CD4-positive, alpha-beta T cell (primary cell): ENCODE measurements at regions of chr1 and their contacts with region 1.

Region 1: GRCh38 chr1:181105134-181106021 is 16.9 kb downstream of the IER5 start:
- DNase-seq: peak; percentile 86 to 97 (median 94)
- ATAC-seq: peak; percentile 88
- H3K4me3 ChIP-seq: peak overlapping the region; percentile 80
- H3K4me3 Mint-ChIP-seq: peak overlapping the region; percentile 88
- H3K27ac ChIP-seq: peak overlapping the region; percentile 58 to 72
- H3K27ac Mint-ChIP-seq: peak overlapping the region; percentile 67
- H3K4me1 ChIP-seq: peaks cover 49% of the 10 kb centered on the region
- H3K4me1 Mint-ChIP-seq: peaks cover 60% of the 10 kb centered on the region
- H3K27me3 ChIP-seq: no peaks in the 10 kb centered on the region
- H3K27me3 Mint-ChIP-seq: no peaks in the 10 kb centered on the region
- CTCF ChIP-seq: peak; percentile 1

Region 2: DNA sequence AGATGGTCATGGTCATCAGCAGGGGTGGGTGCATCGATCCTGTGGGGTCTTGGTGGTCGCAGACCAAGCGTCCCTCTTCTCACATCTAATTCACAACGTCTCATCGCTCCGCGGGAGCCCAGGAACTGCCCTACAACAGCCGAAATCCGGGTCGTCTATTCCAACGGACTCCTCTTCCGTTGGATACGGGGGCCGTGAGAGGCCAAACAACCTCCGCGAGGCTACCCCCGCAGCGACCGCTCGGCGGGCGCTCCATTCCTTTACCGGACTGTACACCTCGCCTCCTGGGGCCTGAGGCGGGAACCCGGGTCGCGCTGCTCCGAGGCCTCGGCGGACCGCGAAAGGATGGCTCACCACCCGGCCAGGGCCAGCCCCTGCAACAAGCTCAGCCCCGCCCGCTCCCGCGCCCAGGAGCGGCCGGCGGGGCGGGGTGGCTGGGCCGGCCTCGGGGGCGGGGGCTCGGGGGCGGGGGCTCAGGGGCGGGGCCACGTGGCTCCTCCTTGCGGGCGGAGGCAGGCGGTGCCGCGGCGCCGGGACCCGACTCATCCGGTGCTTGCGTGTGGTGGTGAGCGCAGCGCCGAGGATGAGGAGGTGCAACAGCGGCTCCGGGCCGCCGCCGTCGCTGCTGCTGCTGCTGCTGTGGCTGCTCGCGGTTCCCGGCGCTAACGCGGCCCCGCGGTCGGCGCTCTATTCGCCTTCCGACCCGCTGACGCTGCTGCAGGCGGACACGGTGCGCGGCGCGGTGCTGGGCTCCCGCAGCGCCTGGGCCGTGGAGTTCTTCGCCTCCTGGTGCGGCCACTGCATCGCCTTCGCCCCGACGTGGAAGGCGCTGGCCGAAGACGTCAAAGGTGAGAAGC is 950.8 kb before region 1 on chr1 and contains the start of gene QSOX1:
- CTCF ChIA-PET with region 1: no interaction called
- POLR2A ChIA-PET with region 1: no interaction called
- intact Hi-C with region 1: loop called in 1 of 2 experiments (anchors 10 kb)
- DNase-seq: peak; percentile 80 to 97 (median 86)
- ATAC-seq: peak; percentile 97
- H3K4me3 ChIP-seq: peak within 1 kb of the TSS; percentile 90
- H3K4me3 Mint-ChIP-seq: peak within 1 kb of the TSS; percentile 95
- H3K27ac ChIP-seq: peak within 1 kb of the TSS; percentile 19 to 42
- H3K27ac Mint-ChIP-seq: peak within 1 kb of the TSS; percentile 82
- H3K4me1 ChIP-seq: peaks cover 27% of the 10 kb centered on the region
- H3K4me1 Mint-ChIP-seq: peaks cover 33% of the 10 kb centered on the region
- H3K27me3 ChIP-seq: no peaks in the 10 kb centered on the region
- H3K27me3 Mint-ChIP-seq: no peaks in the 10 kb centered on the region
- CTCF ChIP-seq: no peak
- total RNA-seq, gene QSOX1: 13.7 to 14.3 TPM

Region 3: GRCh38 chr1:180946541-180947496 is 158.6 kb before region 1 on chr1:
- CTCF ChIA-PET with region 1: no interaction called
- POLR2A ChIA-PET with region 1: no interaction called
- intact Hi-C with region 1: no loop called
- DNase-seq: no peak
- ATAC-seq: no peak
- H3K4me3 ChIP-seq: no peak overlapping the region
- H3K4me3 Mint-ChIP-seq: no peak overlapping the region
- H3K27ac ChIP-seq: no peak overlapping the region
- H3K27ac Mint-ChIP-seq: no peak overlapping the region
- H3K4me1 ChIP-seq: peaks cover 3% of the 10 kb centered on the region
- H3K4me1 Mint-ChIP-seq: no peaks in the 10 kb centered on the region
- H3K27me3 ChIP-seq: no peaks in the 10 kb centered on the region
- H3K27me3 Mint-ChIP-seq: no peaks in the 10 kb centered on the region
- CTCF ChIP-seq: no peak

Region 4: DNA sequence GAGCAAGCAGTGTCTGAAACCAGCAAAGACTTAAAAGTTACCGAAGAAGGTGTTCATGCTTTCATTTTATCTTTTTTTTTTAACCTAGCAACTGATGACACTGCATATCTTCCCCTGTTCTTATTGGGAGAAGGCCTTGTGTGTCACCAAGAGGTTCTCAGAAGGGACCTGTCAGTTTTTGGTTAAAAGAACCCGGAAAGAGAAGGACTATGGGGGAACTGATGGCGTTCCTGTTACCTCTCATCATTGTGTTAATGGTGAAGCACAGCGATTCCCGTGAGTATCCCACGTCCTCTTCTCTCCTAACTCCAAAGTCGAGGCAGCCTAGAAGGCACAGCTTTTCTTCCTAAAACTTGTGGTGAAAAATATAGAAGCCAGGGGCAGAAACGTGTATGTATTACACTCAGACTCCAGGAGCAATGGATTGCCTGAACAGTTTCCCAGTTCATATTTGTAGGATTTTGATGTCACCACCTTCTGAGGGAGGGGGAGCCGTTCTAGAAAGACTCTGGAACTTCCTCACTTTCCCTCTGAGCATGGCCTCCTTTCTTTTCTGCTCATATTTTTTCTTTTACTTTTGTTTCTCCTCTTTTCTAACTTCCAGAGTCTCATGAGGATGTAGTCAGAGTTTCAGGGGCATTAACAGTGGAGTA is 71.5 kb before region 1 on chr1 and contains the start of gene MR1:
- CTCF ChIA-PET with region 1: no interaction called
- POLR2A ChIA-PET with region 1: interaction called, 9 read pairs
- intact Hi-C with region 1: loop called in 1 of 2 experiments (anchors 1 kb)
- DNase-seq: peak in 8 of 14 experiments; percentile 19 to 92 (median 42)
- ATAC-seq: peak; percentile 97
- H3K4me3 ChIP-seq: peak within 1 kb of the TSS; percentile 78
- H3K4me3 Mint-ChIP-seq: peak within 1 kb of the TSS; percentile 97
- H3K27ac ChIP-seq: peak within 1 kb of the TSS; percentile 87 to 97
- H3K27ac Mint-ChIP-seq: peak within 1 kb of the TSS; percentile 92
- H3K4me1 ChIP-seq: peaks cover 47% of the 10 kb centered on the region
- H3K4me1 Mint-ChIP-seq: peaks cover 64% of the 10 kb centered on the region
- H3K27me3 ChIP-seq: no peaks in the 10 kb centered on the region
- H3K27me3 Mint-ChIP-seq: no peaks in the 10 kb centered on the region
- CTCF ChIP-seq: no peak
- total RNA-seq, gene MR1: 16.2 to 18.1 TPM

Region 5: GRCh38 chr1:181142096-181142958 is 36.9 kb after region 1 on chr1:
- CTCF ChIA-PET with region 1: interaction called, 21 read pairs
- POLR2A ChIA-PET with region 1: interaction called, 22 read pairs
- intact Hi-C with region 1: loop called in 1 of 2 experiments (anchors 2 kb)
- DNase-seq: peak; percentile 74 to 92 (median 86)
- ATAC-seq: peak; percentile 100
- H3K4me3 ChIP-seq: no peak overlapping the region
- H3K4me3 Mint-ChIP-seq: no peak overlapping the region
- H3K27ac ChIP-seq: no peak overlapping the region
- H3K27ac Mint-ChIP-seq: no peak overlapping the region
- H3K4me1 ChIP-seq: peaks cover 31% of the 10 kb centered on the region
- H3K4me1 Mint-ChIP-seq: peaks cover 36% of the 10 kb centered on the region
- H3K27me3 ChIP-seq: no peaks in the 10 kb centered on the region
- H3K27me3 Mint-ChIP-seq: no peaks in the 10 kb centered on the region
- CTCF ChIP-seq: peak; percentile 97

Region 6: DNA sequence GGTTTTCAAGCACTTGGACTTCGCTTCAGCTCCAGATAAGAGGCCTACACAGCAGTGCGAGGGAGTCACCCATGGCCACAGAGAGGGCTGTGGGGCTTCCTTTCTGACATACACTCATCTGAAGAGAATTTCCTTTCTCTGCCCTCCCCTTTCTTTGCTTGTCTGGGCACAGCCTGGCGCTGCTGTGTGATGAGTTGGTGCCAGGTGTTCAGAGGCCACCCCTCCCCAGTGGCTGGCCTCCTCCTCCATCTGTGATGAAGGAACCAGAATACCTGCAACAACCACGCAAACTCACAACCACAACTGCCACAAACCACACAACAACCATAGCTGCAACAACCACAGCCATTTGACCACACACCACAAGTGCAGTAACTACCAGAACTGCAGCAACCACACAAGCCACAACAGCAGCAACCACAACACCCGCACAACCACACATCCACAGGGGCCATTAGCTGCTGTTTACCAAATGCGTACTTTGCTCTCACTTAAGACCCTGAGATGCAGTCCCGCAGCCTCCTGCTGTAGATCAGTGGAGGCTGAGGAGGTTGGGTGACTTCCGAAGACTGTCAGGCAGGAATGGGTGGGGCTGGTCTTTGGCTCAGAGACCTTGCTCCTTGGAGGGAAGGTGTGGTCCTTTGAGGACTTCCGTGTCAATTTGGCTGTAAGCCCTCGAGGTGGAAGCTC is 54.2 kb after region 1 on chr1:
- CTCF ChIA-PET with region 1: no interaction called
- POLR2A ChIA-PET with region 1: interaction called, 12 read pairs
- intact Hi-C with region 1: no loop called
- DNase-seq: peak; percentile 30 to 81 (median 49)
- ATAC-seq: peak; percentile 78
- H3K4me3 ChIP-seq: no peak overlapping the region
- H3K4me3 Mint-ChIP-seq: peak overlapping the region; percentile 64
- H3K27ac ChIP-seq: peak overlapping the region in 1 of 2 donors; percentile 52
- H3K27ac Mint-ChIP-seq: peak overlapping the region; percentile 89
- H3K4me1 ChIP-seq: peaks cover 43% of the 10 kb centered on the region
- H3K4me1 Mint-ChIP-seq: peaks cover 45% of the 10 kb centered on the region
- H3K27me3 ChIP-seq: no peaks in the 10 kb centered on the region
- H3K27me3 Mint-ChIP-seq: no peaks in the 10 kb centered on the region
- CTCF ChIP-seq: no peak

Region 7: GRCh38 chr1:181232532-181232931 is 127.2 kb after region 1 on chr1:
- CTCF ChIA-PET with region 1: no interaction called
- POLR2A ChIA-PET with region 1: no interaction called
- intact Hi-C with region 1: no loop called
- DNase-seq: no peak
- ATAC-seq: no peak
- H3K4me3 ChIP-seq: no peak overlapping the region
- H3K4me3 Mint-ChIP-seq: no peak overlapping the region
- H3K27ac ChIP-seq: no peak overlapping the region
- H3K27ac Mint-ChIP-seq: no peak overlapping the region
- H3K4me1 ChIP-seq: no peaks in the 10 kb centered on the region
- H3K4me1 Mint-ChIP-seq: no peaks in the 10 kb centered on the region
- H3K27me3 ChIP-seq: no peaks in the 10 kb centered on the region
- H3K27me3 Mint-ChIP-seq: no peaks in the 10 kb centered on the region
- CTCF ChIP-seq: no peak